PC-9 (cell line): ENCODE measurements at regions of chr2 and their contacts with region 1.

Region 1: GRCh38 chr2:208072250-208072892 is 47.0 kb upstream of the PLEKHM3 start:
- DNase-seq: peak in 1 of 2 experiments; percentile 55
- H3K4me3 ChIP-seq: no peak overlapping the region
- H3K27ac ChIP-seq: no peak overlapping the region
- H3K4me1 ChIP-seq: no peaks in the 10 kb centered on the region
- H3K27me3 ChIP-seq: no peaks in the 10 kb centered on the region
- CTCF ChIP-seq: peak; percentile 74

Region 2: GRCh38 chr2:206800506-206801417 is 1271.6 kb before region 1 on chr2:
- CTCF ChIA-PET with region 1: no interaction called
- POLR2A ChIA-PET with region 1: no interaction called
- intact Hi-C with region 1: loop called (anchors 5 kb)
- DNase-seq: peak; percentile 46 to 59
- H3K4me3 ChIP-seq: no peak overlapping the region
- H3K27ac ChIP-seq: no peak overlapping the region
- H3K4me1 ChIP-seq: no peaks in the 10 kb centered on the region
- H3K27me3 ChIP-seq: no peaks in the 10 kb centered on the region
- CTCF ChIP-seq: peak; percentile 74

Region 3: GRCh38 chr2:207473049-207473930 is 599.1 kb before region 1 on chr2:
- CTCF ChIA-PET with region 1: no interaction called
- POLR2A ChIA-PET with region 1: no interaction called
- intact Hi-C with region 1: loop called (anchors 2 kb)
- DNase-seq: peak; percentile 40 to 46
- H3K4me3 ChIP-seq: no peak overlapping the region
- H3K27ac ChIP-seq: no peak overlapping the region
- H3K4me1 ChIP-seq: peaks cover 18% of the 10 kb centered on the region
- H3K27me3 ChIP-seq: no peaks in the 10 kb centered on the region
- CTCF ChIP-seq: peak; percentile 64

Region 4: GRCh38 chr2:207662203-207662602 is 410.2 kb before region 1 on chr2:
- CTCF ChIA-PET with region 1: no interaction called
- POLR2A ChIA-PET with region 1: no interaction called
- intact Hi-C with region 1: no loop called
- DNase-seq: no peak
- H3K4me3 ChIP-seq: no peak overlapping the region
- H3K27ac ChIP-seq: no peak overlapping the region
- H3K4me1 ChIP-seq: peaks cover 4% of the 10 kb centered on the region; the same call in 1 of the 2 replicates
- H3K27me3 ChIP-seq: no peaks in the 10 kb centered on the region
- CTCF ChIP-seq: no peak

Region 5: GRCh38 chr2:207746131-207746530 is 326.2 kb before region 1 on chr2:
- CTCF ChIA-PET with region 1: no interaction called
- POLR2A ChIA-PET with region 1: no interaction called
- intact Hi-C with region 1: loop called (anchors 1 kb)
- DNase-seq: peak; percentile 40 to 50
- H3K4me3 ChIP-seq: no peak overlapping the region
- H3K27ac ChIP-seq: no peak overlapping the region
- H3K4me1 ChIP-seq: peaks cover 21% of the 10 kb centered on the region
- H3K27me3 ChIP-seq: no peaks in the 10 kb centered on the region
- CTCF ChIP-seq: peak; percentile 84